RWPE1 (cell line): ENCODE measurements at regions of chr16 and their contacts with region 1.

Region 1: DNA sequence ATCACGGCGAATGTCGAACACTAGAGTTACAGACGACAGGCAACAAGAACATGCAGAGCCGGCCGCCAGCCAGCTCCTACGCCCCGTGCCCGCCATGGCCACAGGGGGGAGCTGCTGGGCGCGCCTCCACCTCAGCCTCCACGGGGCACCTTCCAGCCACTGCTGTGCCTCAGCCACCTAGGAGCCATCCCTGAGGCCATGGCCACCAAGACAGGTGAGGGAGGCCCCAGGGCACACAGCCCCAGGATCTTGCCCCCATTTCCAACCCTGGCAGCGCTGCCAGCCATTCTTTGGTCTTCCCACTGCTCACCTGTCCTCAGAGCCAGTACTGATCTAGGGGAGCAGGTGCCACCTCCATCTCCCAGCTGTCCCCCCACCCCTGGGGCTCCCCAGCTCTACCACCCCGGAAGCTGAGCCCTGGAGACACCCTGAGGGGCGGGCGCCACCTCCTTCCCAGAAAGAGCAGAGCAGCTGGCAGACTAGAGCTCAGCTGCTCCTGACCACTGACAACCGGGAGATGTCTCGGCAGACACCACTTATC is 11.8 kb downstream of the GNPTG start:
- DNase-seq: peak; percentile 62
- H3K27ac ChIP-seq: 0 out of 2 replicates have a peak overlapping the region, but pooled peaks have one; percentile 23
- CTCF ChIP-seq: peak; percentile 88

Region 2: GRCh38 chr16:1346422-1347285 is 16.9 kb before region 1 on chr16:
- CTCF ChIA-PET with region 1: interaction called, 13 read pairs
- POLR2A ChIA-PET with region 1: interaction called, 3 read pairs
- DNase-seq: no peak
- H3K27ac ChIP-seq: no peak overlapping the region
- CTCF ChIP-seq: 0 out of 2 replicates have a peak, but pooled peaks have one; percentile 13

Region 3: DNA sequence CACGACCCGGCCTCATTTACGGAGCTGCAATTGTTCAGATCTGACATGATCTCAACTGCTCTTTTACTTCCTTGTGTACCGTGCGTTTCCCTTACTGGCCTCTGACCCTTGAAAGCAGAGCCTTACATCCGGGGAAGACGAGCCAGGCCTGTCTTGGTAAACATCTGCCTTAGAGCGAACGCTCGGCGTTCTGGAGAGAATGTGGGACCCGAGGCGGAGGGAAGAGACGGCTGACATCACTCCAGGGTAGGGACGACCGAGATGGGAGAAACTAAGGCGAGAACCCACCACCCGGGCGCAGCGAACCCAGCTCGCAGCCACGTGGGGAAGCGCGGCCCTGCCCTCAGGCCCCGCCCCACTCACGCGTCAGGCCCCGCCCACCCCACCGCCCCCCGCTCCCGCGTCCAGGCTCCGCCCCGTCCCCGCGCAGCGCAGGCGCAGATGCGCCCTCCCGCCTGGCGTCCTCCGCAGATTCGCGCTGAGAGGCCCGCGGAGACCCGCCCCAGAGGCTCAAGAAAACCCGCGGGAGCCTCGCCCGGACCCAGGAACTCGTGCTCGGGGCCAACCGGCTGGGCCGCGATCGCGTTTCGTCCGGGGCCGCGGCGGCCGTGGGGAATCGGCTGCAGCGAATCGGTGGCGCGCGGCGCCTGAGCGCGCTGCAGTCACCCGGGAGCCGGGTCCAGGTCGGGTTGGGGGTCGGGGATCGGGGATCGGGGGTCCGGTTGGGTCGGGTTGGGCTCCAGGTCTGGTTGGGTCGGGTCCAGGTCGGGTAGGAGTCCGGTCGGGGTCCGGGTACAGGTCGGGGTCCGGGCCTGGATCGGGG is 129.6 kb after region 1 on chr16 and contains the start of gene TELO2:
- CTCF ChIA-PET with region 1: no interaction called
- POLR2A ChIA-PET with region 1: no interaction called
- DNase-seq: peak; percentile 93
- H3K27ac ChIP-seq: peak within 1 kb of the TSS; percentile 79
- CTCF ChIP-seq: no peak

Region 4: DNA sequence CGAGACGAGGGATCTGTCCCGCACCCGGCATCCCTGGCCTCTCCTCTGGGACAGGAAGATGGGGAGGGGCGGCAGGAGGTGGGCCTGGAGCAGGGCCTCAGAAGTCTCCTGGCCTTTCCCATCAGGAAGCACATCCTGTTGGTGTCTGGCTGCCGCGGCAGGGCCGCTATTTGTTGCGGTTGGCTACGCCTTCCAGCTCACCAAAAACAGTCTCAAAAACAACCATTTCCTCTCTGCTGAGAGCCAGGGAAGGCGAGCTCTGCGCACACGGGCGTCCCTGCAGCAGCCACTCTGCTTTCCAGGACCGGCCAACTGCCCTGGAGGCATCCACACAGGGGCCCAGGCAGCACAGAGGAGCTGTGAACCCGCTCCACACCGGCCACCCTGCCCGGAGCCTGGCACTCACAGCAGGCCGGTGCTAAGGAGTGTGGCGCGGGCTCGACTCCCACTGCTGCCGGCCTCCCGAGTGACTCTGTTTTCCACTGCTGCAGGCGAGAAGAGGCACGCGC is 169.9 kb after region 1 on chr16 and contains the start of gene TMEM204:
- CTCF ChIA-PET with region 1: no interaction called
- POLR2A ChIA-PET with region 1: no interaction called
- DNase-seq: no peak
- H3K27ac ChIP-seq: peak within 1 kb of the TSS; percentile 75
- CTCF ChIP-seq: no peak